GM12878 (cell line): ENCODE measurements at regions of chr1 and their contacts with region 1.

Region 1: GRCh38 chr1:40774266-40774998 is 9.2 kb upstream of the KCNQ4 start:
- DNase-seq: no peak
- ATAC-seq: peak; percentile 88
- H3K4me3 ChIP-seq: no peak overlapping the region
- H3K27ac ChIP-seq: no peak overlapping the region
- H3K4me1 ChIP-seq: no peaks in the 10 kb centered on the region
- H3K27me3 ChIP-seq: no peaks in the 10 kb centered on the region
- CTCF ChIP-seq: peak; percentile 79 to 91 (median 86)
- EP300 ChIP-seq: no peak
- POLR2A ChIP-seq: no peak
- RAD21 ChIP-seq: peak; percentile 65

Region 2: GRCh38 chr1:40612345-40612831 is 162.0 kb before region 1 on chr1:
- CTCF ChIA-PET with region 1: interaction called, 9 read pairs
- POLR2A ChIA-PET with region 1: no interaction called
- RAD21 ChIA-PET with region 1: interaction called, 3 read pairs
- SMC1A ChIA-PET with region 1: interaction called, 3 read pairs
- in situ Hi-C with region 1: no loop called
- intact Hi-C with region 1: loop called (anchors 1 kb)
- DNase-seq: peak; percentile 46
- ATAC-seq: peak; percentile 100
- H3K4me3 ChIP-seq: no peak overlapping the region
- H3K27ac ChIP-seq: no peak overlapping the region
- H3K4me1 ChIP-seq: 0 out of 2 replicates have a peak, but pooled peaks cover 3% of the 10 kb centered on the region
- H3K27me3 ChIP-seq: no peaks in the 10 kb centered on the region
- CTCF ChIP-seq: peak; percentile 91 to 97 (median 93)
- EP300 ChIP-seq: no peak
- POLR2A ChIP-seq: no peak
- RAD21 ChIP-seq: peak; percentile 96

Region 3: GRCh38 chr1:40636767-40637166 is 137.7 kb before region 1 on chr1:
- CTCF ChIA-PET with region 1: no interaction called
- POLR2A ChIA-PET with region 1: no interaction called
- RAD21 ChIA-PET with region 1: no interaction called
- SMC1A ChIA-PET with region 1: no interaction called
- in situ Hi-C with region 1: no loop called
- intact Hi-C with region 1: no loop called
- DNase-seq: no peak
- ATAC-seq: no peak
- H3K4me3 ChIP-seq: no peak overlapping the region
- H3K27ac ChIP-seq: no peak overlapping the region
- H3K4me1 ChIP-seq: no peaks in the 10 kb centered on the region
- H3K27me3 ChIP-seq: no peaks in the 10 kb centered on the region
- CTCF ChIP-seq: no peak
- EP300 ChIP-seq: no peak
- POLR2A ChIP-seq: no peak
- RAD21 ChIP-seq: no peak

Region 4: DNA sequence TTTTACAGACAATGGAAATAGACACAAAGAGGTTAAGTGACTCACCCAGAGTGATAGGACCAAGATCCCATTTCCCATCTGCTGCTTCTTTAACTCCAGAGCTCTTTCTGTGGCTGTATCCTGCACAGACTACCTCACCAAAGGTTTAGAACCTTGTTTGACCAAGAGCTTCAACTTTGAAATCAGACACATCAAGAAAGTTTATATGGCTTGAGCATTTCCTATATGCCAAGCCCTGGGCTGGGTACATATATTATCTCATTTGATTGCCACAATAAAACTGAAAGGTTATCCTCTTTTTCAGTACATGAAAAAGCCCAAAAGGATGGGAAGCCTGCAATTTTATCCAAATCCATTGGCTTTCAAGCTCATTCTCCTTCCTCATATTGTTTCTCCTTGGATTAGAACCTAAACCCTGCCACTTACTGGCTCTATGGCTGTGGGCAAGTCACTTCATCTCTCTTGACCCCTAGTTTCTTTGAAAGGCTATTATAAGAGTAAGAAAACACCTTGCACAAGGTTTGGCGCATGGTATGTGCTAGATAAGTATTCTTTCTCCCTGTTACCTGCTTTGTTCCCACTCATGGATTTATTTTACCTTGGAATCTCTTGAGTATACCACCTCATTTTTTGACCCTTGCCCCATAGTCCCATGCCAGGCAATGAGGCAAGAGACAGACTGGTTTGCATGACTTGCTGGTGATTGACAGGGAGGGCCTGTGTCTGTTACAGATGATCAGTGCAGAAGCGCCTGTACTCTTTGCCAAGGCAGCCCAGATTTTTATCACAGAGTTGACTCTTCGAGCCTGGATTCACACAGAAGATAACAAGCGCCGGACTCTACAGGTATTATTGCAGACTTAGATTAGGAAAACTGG is 25.4 kb before region 1 on chr1:
- CTCF ChIA-PET with region 1: interaction called, 84 read pairs
- POLR2A ChIA-PET with region 1: no interaction called
- RAD21 ChIA-PET with region 1: interaction called, 11 read pairs
- SMC1A ChIA-PET with region 1: interaction called, 22 read pairs
- in situ Hi-C with region 1: no loop called
- intact Hi-C with region 1: no loop called
- DNase-seq: no peak
- ATAC-seq: no peak
- H3K4me3 ChIP-seq: no peak overlapping the region
- H3K27ac ChIP-seq: no peak overlapping the region
- H3K4me1 ChIP-seq: peaks cover 22% of the 10 kb centered on the region
- H3K27me3 ChIP-seq: no peaks in the 10 kb centered on the region
- CTCF ChIP-seq: no peak
- EP300 ChIP-seq: no peak
- POLR2A ChIP-seq: no peak
- RAD21 ChIP-seq: no peak

Region 5: DNA sequence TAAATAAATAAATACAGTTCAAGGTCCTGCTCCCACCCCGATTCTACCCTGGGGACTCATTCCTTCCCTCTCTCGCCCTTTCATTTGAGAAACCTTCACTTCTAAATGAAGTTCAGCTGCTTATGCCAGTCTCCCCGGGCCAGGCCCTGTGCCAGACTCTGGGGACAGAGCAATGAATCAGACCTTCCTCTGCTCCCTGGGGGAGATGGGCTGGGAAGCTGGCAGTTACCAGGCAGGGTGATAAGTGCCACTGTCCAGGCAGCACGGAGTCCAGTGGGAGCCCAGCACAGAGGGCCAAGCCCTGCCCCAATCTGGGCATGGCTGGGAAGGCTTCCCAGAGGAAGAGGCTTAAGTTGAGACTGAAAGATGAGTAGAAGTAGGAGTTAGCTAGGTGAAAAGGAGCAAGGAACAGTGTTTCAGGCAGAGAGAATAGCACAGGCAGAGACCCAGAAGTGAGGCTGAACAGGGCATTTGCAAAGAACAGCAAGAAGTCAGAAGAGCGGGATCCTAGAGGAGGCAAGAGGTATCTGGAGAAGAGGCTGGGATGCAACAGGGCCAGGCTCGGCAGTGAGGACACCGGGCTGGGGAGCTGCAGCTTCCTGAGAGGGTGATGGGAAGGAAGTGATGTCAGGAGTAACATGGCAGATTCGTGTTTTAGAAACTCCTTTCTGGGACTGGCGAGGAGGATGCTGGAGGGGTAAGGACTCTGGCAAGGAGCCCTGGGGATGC is 22.7 kb after region 1 on chr1:
- CTCF ChIA-PET with region 1: interaction called, 30 read pairs
- POLR2A ChIA-PET with region 1: no interaction called
- RAD21 ChIA-PET with region 1: interaction called, 8 read pairs
- SMC1A ChIA-PET with region 1: interaction called, 10 read pairs
- in situ Hi-C with region 1: no loop called
- intact Hi-C with region 1: no loop called
- DNase-seq: no peak
- ATAC-seq: no peak
- H3K4me3 ChIP-seq: no peak overlapping the region
- H3K27ac ChIP-seq: no peak overlapping the region
- H3K4me1 ChIP-seq: peaks cover 38% of the 10 kb centered on the region
- H3K27me3 ChIP-seq: no peaks in the 10 kb centered on the region
- CTCF ChIP-seq: no peak
- EP300 ChIP-seq: no peak
- POLR2A ChIP-seq: no peak
- RAD21 ChIP-seq: no peak

Region 6: GRCh38 chr1:40825435-40825788 is 51.0 kb after region 1 on chr1:
- CTCF ChIA-PET with region 1: interaction called, 14 read pairs
- POLR2A ChIA-PET with region 1: no interaction called
- RAD21 ChIA-PET with region 1: interaction called, 4 read pairs
- SMC1A ChIA-PET with region 1: interaction called, 5 read pairs
- in situ Hi-C with region 1: no loop called
- intact Hi-C with region 1: no loop called
- DNase-seq: no peak
- ATAC-seq: peak; percentile 91
- H3K4me3 ChIP-seq: no peak overlapping the region
- H3K27ac ChIP-seq: no peak overlapping the region
- H3K4me1 ChIP-seq: peaks cover 13% of the 10 kb centered on the region
- H3K27me3 ChIP-seq: no peaks in the 10 kb centered on the region
- CTCF ChIP-seq: no peak
- EP300 ChIP-seq: no peak
- POLR2A ChIP-seq: no peak
- RAD21 ChIP-seq: no peak

Region 7: GRCh38 chr1:40855513-40855912 is 81.1 kb after region 1 on chr1:
- CTCF ChIA-PET with region 1: interaction called, 254 read pairs
- POLR2A ChIA-PET with region 1: no interaction called
- RAD21 ChIA-PET with region 1: interaction called, 86 read pairs
- SMC1A ChIA-PET with region 1: interaction called, 111 read pairs
- in situ Hi-C with region 1: no loop called
- intact Hi-C with region 1: loop called (anchors 1 kb)
- DNase-seq: no peak
- ATAC-seq: no peak
- H3K4me3 ChIP-seq: no peak overlapping the region
- H3K27ac ChIP-seq: no peak overlapping the region
- H3K4me1 ChIP-seq: peaks cover 8% of the 10 kb centered on the region
- H3K27me3 ChIP-seq: peaks cover 8 to 9% of the 10 kb centered on the region in 2 experiments; a peak in 3 of 4 replicates
- CTCF ChIP-seq: peak in 2 of 3 experiments; percentile 27 to 28; a peak in 2 of 6 replicates
- EP300 ChIP-seq: no peak
- POLR2A ChIP-seq: no peak
- RAD21 ChIP-seq: no peak

Region 8: DNA sequence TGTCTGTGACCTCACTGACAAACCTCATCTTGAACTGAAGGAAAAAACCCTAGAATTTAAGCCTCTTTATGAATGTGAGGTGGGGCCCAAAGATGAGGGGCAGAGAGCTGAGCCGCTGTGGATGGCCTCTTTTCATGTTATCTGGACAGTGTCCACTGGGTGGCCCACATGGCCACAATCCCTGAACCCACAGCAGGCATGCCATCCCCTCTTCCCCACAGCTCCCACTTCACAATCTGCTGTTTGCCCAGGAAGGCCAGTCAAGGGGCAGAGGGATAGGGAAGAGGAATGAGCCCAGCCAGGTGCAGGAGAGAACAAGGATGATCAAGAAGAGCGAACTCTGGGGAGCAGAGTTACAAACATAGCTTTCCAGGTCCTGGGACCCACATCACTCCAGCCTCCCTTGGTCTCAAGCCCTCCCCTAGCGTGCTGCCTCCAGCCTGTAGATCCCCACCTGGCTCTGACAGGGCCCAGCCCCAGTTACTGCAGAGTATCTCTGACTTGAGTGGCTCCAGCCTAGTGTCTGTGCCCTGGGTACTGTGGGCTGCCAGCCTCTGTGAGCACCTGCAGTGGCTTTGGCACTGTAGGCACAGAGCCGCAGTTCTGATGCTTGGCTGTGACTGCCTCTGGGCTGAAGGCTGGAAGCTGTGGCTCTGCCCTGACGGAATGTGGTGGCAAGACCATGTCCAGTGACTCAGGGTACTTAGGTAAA is 249.0 kb after region 1 on chr1:
- CTCF ChIA-PET with region 1: no interaction called
- POLR2A ChIA-PET with region 1: no interaction called
- RAD21 ChIA-PET with region 1: no interaction called
- SMC1A ChIA-PET with region 1: no interaction called
- in situ Hi-C with region 1: no loop called
- intact Hi-C with region 1: no loop called
- DNase-seq: no peak
- ATAC-seq: peak; percentile 27; the same call in 2 of the 3 replicates
- H3K4me3 ChIP-seq: no peak overlapping the region
- H3K27ac ChIP-seq: no peak overlapping the region
- H3K4me1 ChIP-seq: no peaks in the 10 kb centered on the region
- H3K27me3 ChIP-seq: no peaks in the 10 kb centered on the region
- CTCF ChIP-seq: no peak
- EP300 ChIP-seq: no peak
- POLR2A ChIP-seq: no peak; the same call in 1 of the 2 replicates
- RAD21 ChIP-seq: no peak